ENCODE measurements at regions of chr20 and their contacts with region 1.

Region 1: DNA sequence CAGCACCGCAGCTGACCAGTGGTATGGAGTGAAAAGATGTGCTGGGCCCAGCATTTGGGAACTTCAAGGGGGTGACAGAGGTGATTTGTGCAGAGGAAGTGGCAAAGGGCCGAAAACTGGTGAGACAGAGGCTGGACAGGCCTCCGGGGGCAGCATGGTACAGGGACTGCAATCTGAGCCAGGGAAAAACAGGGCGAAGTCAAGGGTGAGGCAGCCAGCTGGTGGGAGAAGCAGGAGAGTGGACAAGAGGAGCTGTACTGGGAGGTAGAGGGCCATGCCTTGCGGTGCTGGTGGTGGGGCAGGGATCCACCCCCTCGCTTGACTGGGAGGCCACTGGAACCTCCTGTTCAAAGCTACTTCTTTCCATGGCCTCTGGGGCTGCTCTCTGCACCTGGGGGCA is 7.3 kb upstream of the GFRA4 start:
- DNase-seq: no peak
- ATAC-seq: no peak
- H3K4me3 ChIP-seq: no peak overlapping the region
- H3K4me3 Mint-ChIP-seq: no peak overlapping the region
- H3K27ac ChIP-seq: no peak overlapping the region
- H3K27ac Mint-ChIP-seq: no peak overlapping the region
- H3K4me1 ChIP-seq: peaks cover 5 to 9% of the 10 kb centered on the region in 2 donors
- H3K4me1 Mint-ChIP-seq: peaks cover 5% of the 10 kb centered on the region
- H3K27me3 ChIP-seq: peaks cover 0 to 26% (median 9%) of the 10 kb centered on the region in 4 experiments
- H3K27me3 Mint-ChIP-seq: peaks cover 45% of the 10 kb centered on the region
- CTCF ChIP-seq: no peak

Region 2: GRCh38 chr20:3635346-3635745 is 35.2 kb before region 1 on chr20:
- CTCF ChIA-PET with region 1: no interaction called
- POLR2A ChIA-PET with region 1: no interaction called
- intact Hi-C with region 1: no loop called
- DNase-seq: no peak
- ATAC-seq: no peak
- H3K4me3 ChIP-seq: no peak overlapping the region
- H3K4me3 Mint-ChIP-seq: no peak overlapping the region
- H3K27ac ChIP-seq: no peak overlapping the region
- H3K27ac Mint-ChIP-seq: no peak overlapping the region
- H3K4me1 ChIP-seq: no peaks in the 10 kb centered on the region
- H3K4me1 Mint-ChIP-seq: no peaks in the 10 kb centered on the region
- H3K27me3 ChIP-seq: no peaks in the 10 kb centered on the region
- H3K27me3 Mint-ChIP-seq: no peaks in the 10 kb centered on the region
- CTCF ChIP-seq: no peak

Region 3: GRCh38 chr20:3704087-3704486 is 33.6 kb after region 1 on chr20:
- CTCF ChIA-PET with region 1: no interaction called
- POLR2A ChIA-PET with region 1: interaction called, 10 read pairs
- intact Hi-C with region 1: no loop called
- DNase-seq: no peak
- ATAC-seq: no peak
- H3K4me3 ChIP-seq: no peak overlapping the region
- H3K4me3 Mint-ChIP-seq: no peak overlapping the region
- H3K27ac ChIP-seq: no peak overlapping the region
- H3K27ac Mint-ChIP-seq: no peak overlapping the region
- H3K4me1 ChIP-seq: no peaks in the 10 kb centered on the region
- H3K4me1 Mint-ChIP-seq: no peaks in the 10 kb centered on the region
- H3K27me3 ChIP-seq: peaks cover 0 to 4% (median 0%) of the 10 kb centered on the region in 4 experiments
- H3K27me3 Mint-ChIP-seq: peaks cover 10% of the 10 kb centered on the region
- CTCF ChIP-seq: no peak

Measured in B cell (primary cell).